Thyroid gland (tissue), 4 donors: ENCODE measurements at regions of chr1 and their contacts with region 1.

Region 1: DNA sequence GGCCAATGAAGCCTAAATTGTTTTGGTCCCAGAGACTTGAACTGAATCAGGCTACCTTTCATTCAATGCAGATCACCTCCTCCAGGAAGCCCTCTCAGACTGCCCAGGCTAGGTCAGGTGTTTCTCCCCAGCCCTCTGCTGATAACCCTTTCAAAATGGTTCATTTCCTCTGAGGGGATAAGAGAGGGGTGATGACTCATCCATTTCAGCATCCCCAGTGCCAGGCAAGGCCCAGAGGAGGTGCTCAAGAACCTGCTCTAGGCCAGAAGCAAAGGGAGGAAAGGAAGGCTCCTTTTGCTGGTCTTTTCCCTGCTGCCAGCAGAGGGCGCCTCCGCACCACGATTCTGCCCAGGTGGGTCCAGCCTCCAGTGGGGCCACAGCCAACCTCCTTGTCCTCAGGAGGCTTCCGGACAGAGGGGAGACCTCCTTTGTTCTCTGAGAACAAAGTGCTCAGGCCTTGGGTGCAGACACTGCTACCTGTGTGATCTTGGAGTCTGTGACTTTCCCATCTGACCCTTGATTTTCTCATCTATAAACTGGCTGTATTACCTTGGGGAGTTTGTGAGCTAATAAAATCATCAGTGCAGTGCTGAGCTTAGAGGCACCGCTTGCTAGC is 45.3 kb upstream of the ARHGEF10L start:
- DNase-seq: peak; percentile 64 to 72
- H3K4me3 ChIP-seq: no peak overlapping the region
- H3K27ac ChIP-seq: no peak overlapping the region
- H3K4me1 ChIP-seq: no peaks in the 10 kb centered on the region
- H3K27me3 ChIP-seq: no peaks in the 10 kb centered on the region
- CTCF ChIP-seq: peak; percentile 55 to 86 (median 84)
- POLR2A ChIP-seq: no peak

Region 2: DNA sequence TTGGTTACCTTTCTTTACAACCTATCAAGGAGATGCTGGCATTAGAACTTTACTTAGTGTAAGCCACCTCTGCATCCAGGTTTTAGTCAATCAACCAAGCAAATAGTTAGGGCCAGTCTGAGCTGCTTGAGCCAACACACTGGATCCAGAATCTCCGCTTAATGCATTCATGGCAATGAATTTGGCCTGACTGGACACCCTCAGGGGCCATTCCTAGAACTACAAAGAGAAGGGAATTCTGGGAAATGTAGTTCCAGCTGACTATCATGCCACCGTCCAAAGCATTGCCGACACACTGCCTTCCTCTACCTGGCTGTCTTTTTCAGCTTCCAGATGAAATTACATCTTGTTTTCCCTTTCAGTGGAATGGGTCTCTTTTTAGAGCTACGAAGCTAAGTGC is 450.4 kb after region 1 on chr1:
- intact Hi-C with region 1: no loop called
- DNase-seq: no peak
- H3K4me3 ChIP-seq: no peak overlapping the region
- H3K27ac ChIP-seq: no peak overlapping the region
- H3K4me1 ChIP-seq: no peaks in the 10 kb centered on the region
- H3K27me3 ChIP-seq: no peaks in the 10 kb centered on the region
- CTCF ChIP-seq: no peak
- POLR2A ChIP-seq: no peak

Region 3: GRCh38 chr1:18100491-18101063 is 606.4 kb after region 1 on chr1:
- intact Hi-C with region 1: loop called (anchors 10 kb)
- DNase-seq: peak; percentile 53 to 65
- H3K4me3 ChIP-seq: no peak overlapping the region
- H3K27ac ChIP-seq: no peak overlapping the region
- H3K4me1 ChIP-seq: no peaks in the 10 kb centered on the region
- H3K27me3 ChIP-seq: no peaks in the 10 kb centered on the region
- CTCF ChIP-seq: peak; percentile 47 to 77 (median 58)
- POLR2A ChIP-seq: no peak